Ovary (tissue), 10 donors: ENCODE measurements at regions of chr6 and their contacts with region 1.

Region 1: GRCh38 chr6:92180090-92180489 is 1239.3 kb downstream of the EPHA7 start:
- DNase-seq: no peak
- H3K4me3 ChIP-seq: no peak overlapping the region
- H3K27ac ChIP-seq: no peak overlapping the region
- H3K4me1 ChIP-seq: no peaks in the 10 kb centered on the region
- H3K27me3 ChIP-seq: no peaks in the 10 kb centered on the region
- CTCF ChIP-seq: no peak
- EP300 ChIP-seq: no peak
- POLR2A ChIP-seq: no peak

Region 2: GRCh38 chr6:92201618-92202017 is 21.5 kb after region 1 on chr6:
- intact Hi-C with region 1: loop called in 1 of 4 experiments (anchors 2 kb)
- DNase-seq: no peak
- H3K4me3 ChIP-seq: no peak overlapping the region
- H3K27ac ChIP-seq: no peak overlapping the region
- H3K4me1 ChIP-seq: no peaks in the 10 kb centered on the region
- H3K27me3 ChIP-seq: no peaks in the 10 kb centered on the region
- CTCF ChIP-seq: no peak
- EP300 ChIP-seq: no peak
- POLR2A ChIP-seq: no peak